Body of pancreas (tissue), 4 donors: ENCODE measurements at regions of chr5 and their contacts with region 1.

Region 1: GRCh38 chr5:55146543-55147151 is 13.3 kb upstream of the GPX8 start:
- DNase-seq: peak; percentile 80 to 84 (median 82)
- ATAC-seq: peak; percentile 92
- H3K4me3 ChIP-seq: no peak overlapping the region
- H3K27ac ChIP-seq: no peak overlapping the region
- H3K4me1 ChIP-seq: no peaks in the 10 kb centered on the region
- H3K27me3 ChIP-seq: no peaks in the 10 kb centered on the region
- CTCF ChIP-seq: peak; percentile 79 to 96 (median 86)
- POLR2A ChIP-seq: no peak

Region 2: DNA sequence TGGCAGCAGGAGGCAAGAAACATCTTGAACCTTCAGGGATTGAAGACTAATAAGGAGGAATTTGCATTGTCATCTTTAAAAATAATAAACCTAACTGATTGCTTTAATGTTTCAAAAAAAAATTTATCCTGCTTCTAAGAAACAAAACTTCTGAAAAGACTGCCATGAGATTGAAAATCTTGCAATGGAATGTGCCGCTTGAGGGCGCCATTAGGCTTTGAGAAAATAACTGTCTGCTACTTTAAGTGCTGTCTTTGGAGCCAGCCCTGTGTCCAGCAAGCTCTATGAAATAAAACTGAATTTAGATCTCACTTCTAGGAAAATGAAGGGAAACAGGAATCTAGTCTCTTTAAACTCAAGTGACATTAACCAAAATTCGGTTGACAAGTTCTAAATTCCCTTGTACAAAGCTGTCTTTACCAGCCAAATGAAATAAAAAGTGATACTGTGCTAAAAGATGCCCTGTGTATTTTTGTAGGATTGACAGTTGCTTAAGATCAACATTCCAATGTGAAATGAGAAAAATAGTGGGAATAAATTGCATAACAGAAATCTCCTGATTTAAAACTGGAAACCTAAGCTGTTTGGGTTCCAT is 240.6 kb before region 1 on chr5:
- intact Hi-C with region 1: loop called (anchors 10 kb)
- DNase-seq: peak; percentile 54 to 80 (median 72)
- ATAC-seq: no peak
- H3K4me3 ChIP-seq: no peak overlapping the region
- H3K27ac ChIP-seq: no peak overlapping the region
- H3K4me1 ChIP-seq: no peaks in the 10 kb centered on the region
- H3K27me3 ChIP-seq: no peaks in the 10 kb centered on the region
- CTCF ChIP-seq: peak in 6 of 7 experiments; percentile 42 to 67 (median 60)
- POLR2A ChIP-seq: no peak

Region 3: GRCh38 chr5:54944364-54944763 is 202.3 kb before region 1 on chr5:
- intact Hi-C with region 1: loop called (anchors 10 kb)
- DNase-seq: peak in 3 of 4 donors; percentile 13 to 30 (median 20)
- ATAC-seq: no peak
- H3K4me3 ChIP-seq: no peak overlapping the region
- H3K27ac ChIP-seq: no peak overlapping the region
- H3K4me1 ChIP-seq: no peaks in the 10 kb centered on the region
- H3K27me3 ChIP-seq: no peaks in the 10 kb centered on the region
- CTCF ChIP-seq: peak; percentile 21 to 61 (median 49)
- POLR2A ChIP-seq: no peak

Region 4: DNA sequence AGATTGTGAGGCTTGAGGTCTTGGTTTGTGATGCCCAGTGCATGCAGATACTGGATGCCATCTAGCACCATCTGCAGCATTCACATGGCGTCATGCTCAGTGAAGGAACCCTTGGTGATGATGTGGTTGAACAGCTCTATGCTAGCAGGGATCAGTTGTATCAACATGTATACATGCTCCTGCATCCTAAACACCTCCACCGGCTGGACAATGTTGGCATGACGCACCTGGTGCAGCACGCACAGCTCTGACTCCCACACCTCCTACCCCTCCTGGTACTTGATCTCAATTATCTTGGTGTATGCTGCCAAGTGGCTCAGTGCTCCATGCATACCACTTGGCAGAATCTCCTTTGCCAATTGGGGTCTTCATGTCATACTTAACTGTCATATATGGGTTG is 210.2 kb after region 1 on chr5:
- intact Hi-C with region 1: no loop called
- DNase-seq: no peak
- ATAC-seq: no peak
- H3K4me3 ChIP-seq: no peak overlapping the region
- H3K27ac ChIP-seq: no peak overlapping the region
- H3K4me1 ChIP-seq: no peaks in the 10 kb centered on the region
- H3K27me3 ChIP-seq: no peaks in the 10 kb centered on the region
- CTCF ChIP-seq: no peak
- POLR2A ChIP-seq: no peak